ENCODE measurements at regions of chr1 and their contacts with region 1.

Region 1: GRCh38 chr1:29703596-29704370 is 467.5 kb downstream of the PTPRU start:
- DNase-seq: no peak
- ATAC-seq: peak; percentile 76
- H3K4me3 ChIP-seq: no peak overlapping the region
- H3K27ac ChIP-seq: no peak overlapping the region
- H3K4me1 ChIP-seq: peaks cover 0 to 16% of the 10 kb centered on the region in 2 experiments; a peak in 3 of 4 replicates
- H3K27me3 ChIP-seq: peaks cover 18% of the 10 kb centered on the region
- CTCF ChIP-seq: peak; percentile 65 to 82 (median 80); a peak in 5 of 6 replicates
- POLR2A ChIP-seq: no peak
- RAD21 ChIP-seq: peak; percentile 64

Region 2: DNA sequence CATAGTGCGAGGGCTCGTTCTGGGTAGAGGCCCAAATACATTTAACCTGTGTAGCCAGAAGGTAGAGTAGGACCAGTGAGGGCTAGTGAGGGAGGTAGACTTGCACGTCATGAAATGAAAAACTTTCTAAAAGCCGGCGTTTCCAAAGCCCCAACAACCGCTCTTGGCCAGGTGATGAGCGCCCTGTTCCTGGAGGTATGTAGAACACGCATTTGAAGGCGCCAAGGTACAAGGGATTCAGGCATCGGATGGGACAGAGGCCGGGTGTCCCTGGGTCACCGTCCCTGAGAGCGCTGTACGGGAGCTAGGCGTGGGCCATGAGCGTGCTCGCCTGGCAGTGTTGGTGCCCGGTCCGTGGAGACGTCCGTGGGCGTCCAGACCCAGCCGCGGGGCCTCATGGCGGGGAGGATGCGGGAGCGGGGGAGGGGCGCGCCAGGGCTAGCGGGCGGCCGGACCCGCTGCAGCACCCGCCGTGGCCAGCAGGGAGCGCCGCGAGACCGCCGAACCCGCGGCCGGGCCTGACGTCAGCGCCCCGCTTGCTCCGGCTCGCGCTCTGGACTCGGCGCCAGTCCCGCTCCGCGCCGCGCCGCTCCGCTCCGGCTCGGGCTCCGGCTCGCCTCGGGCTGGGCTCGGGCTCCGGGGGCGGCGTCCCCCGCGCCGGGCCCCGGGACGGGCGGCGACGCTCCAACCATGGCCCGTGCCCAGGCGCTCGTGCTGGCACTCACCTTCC is 467.7 kb before region 1 on chr1 and contains the start of gene PTPRU:
- CTCF ChIA-PET with region 1: no interaction called
- POLR2A ChIA-PET with region 1: no interaction called
- RAD21 ChIA-PET with region 1: no interaction called
- intact Hi-C with region 1: loop called (anchors 5 kb)
- DNase-seq: no peak
- ATAC-seq: peak; percentile 77
- H3K4me3 ChIP-seq: peak within 1 kb of the TSS; percentile 89 to 97
- H3K27ac ChIP-seq: peak within 1 kb of the TSS; percentile 53; the same call in 1 of the 2 replicates
- H3K4me1 ChIP-seq: peaks cover 17 to 35% of the 10 kb centered on the region in 2 experiments
- H3K27me3 ChIP-seq: no peaks in the 10 kb centered on the region
- CTCF ChIP-seq: peak; percentile 26 to 53 (median 48); a peak in 3 of 6 replicates
- POLR2A ChIP-seq: no peak
- RAD21 ChIP-seq: peak; percentile 77
- total RNA-seq, gene PTPRU: 40.7 TPM

Region 3: DNA sequence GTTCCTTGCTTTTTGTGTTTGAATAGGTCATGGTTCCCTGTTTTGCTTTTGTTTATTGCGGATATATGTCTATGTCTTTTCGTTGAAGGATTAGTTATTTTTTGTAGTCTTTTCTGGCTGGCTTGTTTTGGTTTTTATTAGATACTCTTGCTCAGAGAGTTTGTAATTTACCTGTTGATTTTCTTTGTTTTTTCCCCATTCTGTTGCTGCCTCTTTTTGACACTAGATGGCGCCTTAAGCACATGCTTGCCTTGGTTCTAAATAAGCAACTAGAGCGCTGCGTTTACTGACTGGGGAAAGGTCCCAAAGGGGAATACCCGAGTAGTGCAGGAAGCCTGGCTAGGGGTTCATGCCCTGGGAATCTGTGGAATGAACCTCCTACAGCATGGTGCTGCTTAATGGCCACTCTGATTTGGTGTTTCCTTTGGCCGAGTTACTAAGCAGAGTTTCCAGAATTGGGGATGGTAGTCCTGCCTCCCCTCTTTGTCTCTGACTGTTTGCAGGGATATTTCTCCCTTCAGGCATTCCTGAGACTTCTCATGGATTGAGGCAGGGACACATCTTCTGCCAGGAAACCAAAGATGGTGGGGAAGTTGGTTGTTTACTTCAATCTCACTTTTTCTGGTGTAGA is 324.2 kb before region 1 on chr1:
- CTCF ChIA-PET with region 1: no interaction called
- POLR2A ChIA-PET with region 1: no interaction called
- RAD21 ChIA-PET with region 1: no interaction called
- intact Hi-C with region 1: loop called (anchors 5 kb)
- DNase-seq: peak; percentile 72
- ATAC-seq: peak; percentile 67
- H3K4me3 ChIP-seq: no peak overlapping the region
- H3K27ac ChIP-seq: no peak overlapping the region
- H3K4me1 ChIP-seq: peaks cover 0 to 5% of the 10 kb centered on the region in 2 experiments; a peak in 1 of 4 replicates
- H3K27me3 ChIP-seq: no peaks in the 10 kb centered on the region
- CTCF ChIP-seq: peak; percentile 87 to 99 (median 93)
- POLR2A ChIP-seq: no peak
- RAD21 ChIP-seq: peak; percentile 96

Region 4: DNA sequence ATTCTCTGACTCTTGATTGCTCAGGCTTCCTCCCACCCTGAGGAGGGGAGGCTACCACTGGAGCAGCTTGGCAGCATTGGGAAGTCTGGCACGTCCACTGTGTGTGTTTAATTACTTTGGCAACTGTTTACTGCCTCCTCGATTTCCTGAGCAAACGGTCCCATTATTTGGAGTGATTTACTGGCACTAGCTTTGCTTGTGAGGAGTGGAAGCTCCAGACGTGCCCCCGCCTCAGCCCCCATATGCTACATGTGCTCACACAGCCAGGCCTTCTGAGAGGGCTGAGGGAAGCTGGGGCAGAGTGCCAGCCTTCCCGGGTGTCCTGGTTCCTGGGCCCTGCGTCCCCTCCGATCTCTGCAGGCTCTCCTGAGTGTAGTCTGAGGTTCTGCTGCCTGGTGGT is 161.2 kb before region 1 on chr1:
- CTCF ChIA-PET with region 1: no interaction called
- POLR2A ChIA-PET with region 1: no interaction called
- RAD21 ChIA-PET with region 1: no interaction called
- intact Hi-C with region 1: no loop called
- DNase-seq: no peak
- ATAC-seq: no peak
- H3K4me3 ChIP-seq: no peak overlapping the region
- H3K27ac ChIP-seq: no peak overlapping the region
- H3K4me1 ChIP-seq: no peaks in the 10 kb centered on the region
- H3K27me3 ChIP-seq: no peaks in the 10 kb centered on the region
- CTCF ChIP-seq: no peak
- POLR2A ChIP-seq: no peak
- RAD21 ChIP-seq: no peak

Region 5: GRCh38 chr1:29603622-29604021 is 100.2 kb before region 1 on chr1:
- CTCF ChIA-PET with region 1: no interaction called
- POLR2A ChIA-PET with region 1: no interaction called
- RAD21 ChIA-PET with region 1: no interaction called
- intact Hi-C with region 1: no loop called
- DNase-seq: no peak
- ATAC-seq: no peak
- H3K4me3 ChIP-seq: no peak overlapping the region
- H3K27ac ChIP-seq: no peak overlapping the region
- H3K4me1 ChIP-seq: no peaks in the 10 kb centered on the region
- H3K27me3 ChIP-seq: no peaks in the 10 kb centered on the region
- CTCF ChIP-seq: no peak
- POLR2A ChIP-seq: no peak
- RAD21 ChIP-seq: no peak

Region 6: DNA sequence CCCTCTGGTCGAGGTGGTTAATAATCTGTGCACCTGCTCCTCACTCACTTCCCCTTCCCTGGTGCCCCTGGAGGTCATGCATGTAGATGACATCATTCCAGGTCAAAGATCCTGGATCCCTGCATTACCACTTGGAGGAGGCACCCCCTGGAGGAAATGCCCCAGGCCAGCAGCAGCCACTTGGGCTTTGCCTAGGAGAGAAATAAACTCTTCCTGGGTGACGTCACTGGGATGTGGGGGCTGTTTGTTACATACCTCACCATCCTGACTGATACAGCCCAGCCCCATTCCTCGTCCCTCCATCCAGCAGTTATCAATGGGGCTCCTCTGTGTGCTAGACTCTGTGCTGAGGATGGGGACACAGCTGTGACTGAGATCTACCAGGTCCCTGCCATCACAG is 33.9 kb before region 1 on chr1:
- CTCF ChIA-PET with region 1: interaction called, 3 read pairs
- POLR2A ChIA-PET with region 1: no interaction called
- RAD21 ChIA-PET with region 1: no interaction called
- intact Hi-C with region 1: loop called (anchors 1 kb)
- DNase-seq: no peak
- ATAC-seq: no peak
- H3K4me3 ChIP-seq: no peak overlapping the region
- H3K27ac ChIP-seq: no peak overlapping the region
- H3K4me1 ChIP-seq: peaks cover 0 to 22% of the 10 kb centered on the region in 2 experiments; a peak in 1 of 4 replicates
- H3K27me3 ChIP-seq: peaks cover 16% of the 10 kb centered on the region
- CTCF ChIP-seq: no peak
- POLR2A ChIP-seq: no peak
- RAD21 ChIP-seq: no peak

Region 7: DNA sequence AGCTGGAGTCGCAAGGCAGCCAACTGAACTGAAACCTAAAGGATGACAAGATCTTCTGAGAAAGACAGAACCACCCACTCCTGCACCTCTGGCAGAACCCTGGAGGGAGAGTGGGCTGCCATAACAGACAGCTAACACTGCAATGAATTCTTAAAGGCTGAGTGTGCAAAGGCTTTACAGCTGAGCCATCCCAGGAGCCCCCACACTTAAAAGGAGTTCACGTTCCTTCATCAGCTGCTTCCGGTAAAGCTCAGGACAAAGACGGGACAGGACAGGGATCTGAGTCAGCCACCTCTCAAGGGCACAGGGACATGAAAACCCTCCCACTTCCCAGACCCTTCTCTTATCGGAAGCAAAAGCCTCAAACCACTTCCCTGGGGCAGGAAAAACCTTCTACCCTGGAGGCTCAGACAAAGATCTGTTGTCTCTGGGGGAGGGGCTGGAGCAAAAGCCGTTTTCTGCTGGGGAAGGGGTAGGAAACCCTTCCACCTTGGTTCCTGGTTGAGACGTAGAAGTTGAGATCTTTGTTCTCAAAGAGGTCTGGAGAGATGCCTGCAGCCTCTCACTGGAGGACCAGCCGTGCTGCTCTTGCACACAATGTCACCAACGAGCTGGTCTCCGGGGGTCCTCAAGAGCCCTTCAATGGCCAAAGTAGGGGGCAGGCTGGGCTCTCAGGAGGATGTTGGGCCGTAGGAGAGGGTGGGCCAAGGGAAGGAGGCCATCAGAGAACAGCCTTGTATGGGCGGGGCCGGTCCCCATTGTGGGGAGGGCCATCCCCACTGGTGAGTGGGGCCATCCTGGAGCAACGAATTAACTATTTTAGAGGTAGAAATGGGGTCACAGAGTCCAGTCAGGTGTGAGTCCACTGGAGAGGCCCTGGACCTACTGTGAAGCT is 15.1 kb before region 1 on chr1:
- CTCF ChIA-PET with region 1: interaction called, 15 read pairs
- POLR2A ChIA-PET with region 1: no interaction called
- RAD21 ChIA-PET with region 1: no interaction called
- intact Hi-C with region 1: no loop called
- DNase-seq: no peak
- ATAC-seq: no peak
- H3K4me3 ChIP-seq: no peak overlapping the region
- H3K27ac ChIP-seq: no peak overlapping the region
- H3K4me1 ChIP-seq: peaks cover 0 to 10% of the 10 kb centered on the region in 2 experiments; a peak in 2 of 4 replicates
- H3K27me3 ChIP-seq: peaks cover 55% of the 10 kb centered on the region
- CTCF ChIP-seq: no peak
- POLR2A ChIP-seq: no peak
- RAD21 ChIP-seq: no peak

Region 8: GRCh38 chr1:29849038-29849750 is 145.4 kb after region 1 on chr1:
- CTCF ChIA-PET with region 1: no interaction called
- POLR2A ChIA-PET with region 1: no interaction called
- RAD21 ChIA-PET with region 1: no interaction called
- intact Hi-C with region 1: loop called (anchors 10 kb)
- DNase-seq: no peak
- ATAC-seq: peak; percentile 96
- H3K4me3 ChIP-seq: no peak overlapping the region
- H3K27ac ChIP-seq: no peak overlapping the region
- H3K4me1 ChIP-seq: peaks cover 0 to 5% of the 10 kb centered on the region in 2 experiments; a peak in 3 of 4 replicates
- H3K27me3 ChIP-seq: peaks cover 8% of the 10 kb centered on the region; the same call in 1 of the 2 replicates
- CTCF ChIP-seq: peak; percentile 65 to 91 (median 72)
- POLR2A ChIP-seq: no peak
- RAD21 ChIP-seq: peak; percentile 82

Measured in HCT116 (cell line).